ENCODE measurements at regions of chr1 and their contacts with region 1.

Region 1: GRCh38 chr1:172895050-172895460 is 155.7 kb downstream of the TNFSF18 start:
- DNase-seq: no peak
- ATAC-seq: peak; percentile 88
- H3K4me3 Mint-ChIP-seq: peak overlapping the region; percentile 75
- H3K27ac Mint-ChIP-seq: peak overlapping the region; percentile 92
- H3K4me1 Mint-ChIP-seq: peaks cover 36% of the 10 kb centered on the region
- H3K27me3 Mint-ChIP-seq: no peaks in the 10 kb centered on the region

Region 2: DNA sequence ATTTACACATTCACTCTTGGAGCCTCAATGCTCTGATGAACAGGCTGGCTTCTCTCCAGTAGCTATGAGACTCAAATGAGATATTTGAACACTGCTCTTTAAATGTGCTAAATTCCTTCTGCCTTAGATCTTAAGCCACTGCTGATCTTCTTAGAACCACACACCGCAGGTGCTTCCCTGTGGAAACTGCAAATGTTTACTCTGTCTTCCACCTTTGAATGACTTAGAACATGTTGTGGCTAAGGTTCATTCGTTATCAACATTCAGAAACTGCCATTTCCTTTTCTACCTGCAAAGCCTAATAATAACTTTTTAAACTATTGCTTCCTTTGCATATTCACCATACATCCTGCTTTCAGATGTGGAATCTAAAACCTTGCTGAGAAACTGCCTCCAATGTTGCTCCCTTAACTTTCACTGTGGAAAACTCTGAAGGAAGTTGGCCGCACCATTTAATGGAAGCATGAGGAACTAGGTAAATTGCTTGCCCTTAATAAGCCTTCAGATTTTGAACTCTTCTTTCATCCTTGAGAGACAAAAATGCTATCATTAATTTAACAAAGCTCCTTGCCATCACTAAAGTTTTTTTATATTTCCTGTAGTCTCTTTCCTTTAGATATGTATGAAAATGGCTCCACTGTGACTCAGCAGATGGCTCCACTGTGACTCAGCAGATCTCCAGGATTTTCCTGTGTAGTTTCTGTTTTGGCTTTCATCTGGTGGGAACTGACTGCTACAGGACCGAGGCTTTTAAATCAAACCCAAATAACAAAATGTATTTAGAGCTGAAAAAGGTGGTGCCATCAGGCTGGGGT is 11.9 kb after region 1 on chr1:
- POLR2A ChIA-PET with region 1: interaction called, 13 read pairs
- DNase-seq: no peak
- ATAC-seq: peak; percentile 72
- H3K4me3 Mint-ChIP-seq: peak overlapping the region; percentile 19
- H3K27ac Mint-ChIP-seq: peak overlapping the region; percentile 80
- H3K4me1 Mint-ChIP-seq: peaks cover 25% of the 10 kb centered on the region
- H3K27me3 Mint-ChIP-seq: no peaks in the 10 kb centered on the region

Region 3: GRCh38 chr1:172926070-172926469 is 31.0 kb after region 1 on chr1:
- POLR2A ChIA-PET with region 1: no interaction called
- DNase-seq: no peak
- ATAC-seq: no peak
- H3K4me3 Mint-ChIP-seq: no peak overlapping the region
- H3K27ac Mint-ChIP-seq: no peak overlapping the region
- H3K4me1 Mint-ChIP-seq: peaks cover 3% of the 10 kb centered on the region
- H3K27me3 Mint-ChIP-seq: peaks cover 2% of the 10 kb centered on the region

Measured in activated naive CD8-positive, alpha-beta T cell treated with anti-CD3 and anti-CD28 coated beads, Interleukin-2, amount 10 ng/mL, durations not matched to agents 7 days and 5 days (primary cell).